ENCODE measurements at regions of chr2 and their contacts with region 1.

Region 1: GRCh38 chr2:41869542-41870264 is 178.1 kb upstream of the PKDCC start:
- DNase-seq: peak; percentile 82
- H3K4me3 Mint-ChIP-seq: no peak overlapping the region
- H3K27ac Mint-ChIP-seq: no peak overlapping the region
- H3K4me1 Mint-ChIP-seq: peaks cover 42% of the 10 kb centered on the region
- H3K27me3 Mint-ChIP-seq: no peaks in the 10 kb centered on the region
- CTCF ChIP-seq: peak; percentile 87

Region 2: DNA sequence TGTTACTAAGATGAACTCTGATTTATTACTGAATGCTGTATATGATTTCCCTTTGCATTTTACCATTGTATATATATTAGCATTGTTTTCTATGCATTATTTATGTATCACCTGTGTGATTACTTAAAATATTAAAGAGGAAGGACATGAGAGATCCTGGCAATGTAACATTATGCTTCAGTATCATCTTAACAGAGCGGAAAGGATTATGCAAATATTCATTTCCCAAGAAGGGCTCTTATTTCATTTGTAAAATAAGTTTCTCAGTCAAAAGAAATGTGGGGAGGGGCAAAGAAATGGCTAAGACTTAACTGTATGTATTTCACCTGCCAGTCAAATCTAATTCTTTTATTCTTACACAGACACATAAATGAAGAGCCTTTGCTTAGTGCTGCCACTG is 476.1 kb before region 1 on chr2:
- CTCF ChIA-PET with region 1: no interaction called
- intact Hi-C with region 1: no loop called
- DNase-seq: no peak
- H3K4me3 Mint-ChIP-seq: no peak overlapping the region
- H3K27ac Mint-ChIP-seq: no peak overlapping the region
- H3K4me1 Mint-ChIP-seq: no peaks in the 10 kb centered on the region
- H3K27me3 Mint-ChIP-seq: no peaks in the 10 kb centered on the region
- CTCF ChIP-seq: no peak

Region 3: GRCh38 chr2:41853427-41854216 is 16.1 kb before region 1 on chr2:
- CTCF ChIA-PET with region 1: interaction called, 16 read pairs
- intact Hi-C with region 1: no loop called
- DNase-seq: peak; percentile 66
- H3K4me3 Mint-ChIP-seq: no peak overlapping the region
- H3K27ac Mint-ChIP-seq: no peak overlapping the region
- H3K4me1 Mint-ChIP-seq: peaks cover 2% of the 10 kb centered on the region
- H3K27me3 Mint-ChIP-seq: no peaks in the 10 kb centered on the region
- CTCF ChIP-seq: peak; percentile 76

Region 4: DNA sequence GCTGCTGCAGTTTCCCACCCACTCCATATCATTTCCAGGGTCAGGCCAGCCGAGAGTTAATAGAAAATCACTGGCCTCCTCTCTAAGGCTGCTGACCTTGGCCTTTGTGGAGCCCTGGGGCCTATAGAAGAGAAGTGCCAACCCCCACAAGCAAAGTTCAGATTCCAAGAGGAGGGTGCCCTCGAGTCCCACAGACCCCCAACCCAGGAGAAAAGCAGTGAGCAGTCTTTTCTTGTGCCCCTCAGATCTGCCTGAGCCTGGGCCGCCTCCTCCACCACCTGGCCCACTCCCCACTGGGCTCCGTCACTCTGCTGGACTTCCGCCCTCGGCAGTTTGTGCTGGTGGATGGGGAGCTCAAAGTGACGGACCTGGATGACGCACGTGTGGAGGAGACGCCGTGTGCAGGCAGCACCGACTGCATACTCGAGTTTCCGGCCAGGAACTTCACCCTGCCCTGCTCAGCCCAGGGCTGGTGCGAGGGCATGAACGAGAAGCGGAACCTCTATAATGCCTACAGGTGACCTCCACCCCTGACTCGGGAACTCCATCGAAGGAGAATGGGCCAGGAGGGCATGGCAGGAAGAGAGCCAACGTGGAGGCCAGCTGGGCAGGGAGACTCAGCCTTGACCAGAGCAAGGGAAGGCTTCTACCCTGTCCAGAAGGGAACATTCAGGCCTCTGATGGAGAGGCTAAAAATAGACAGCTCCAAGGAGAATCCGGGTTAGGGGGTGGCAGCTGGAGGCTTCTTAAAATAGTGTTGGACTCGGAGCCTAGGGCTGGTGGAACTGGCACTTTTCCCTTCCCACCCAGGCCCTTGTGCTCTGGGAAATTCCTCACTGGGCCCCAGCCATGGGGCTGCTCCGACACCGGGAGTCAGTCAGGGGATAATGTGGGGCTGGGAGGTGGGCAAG is 184.3 kb after region 1 on chr2:
- CTCF ChIA-PET with region 1: interaction called, 10 read pairs
- intact Hi-C with region 1: loop called (anchors 1 kb)
- DNase-seq: no peak
- H3K4me3 Mint-ChIP-seq: no peak overlapping the region
- H3K27ac Mint-ChIP-seq: no peak overlapping the region
- H3K4me1 Mint-ChIP-seq: peaks cover 40% of the 10 kb centered on the region
- H3K27me3 Mint-ChIP-seq: no peaks in the 10 kb centered on the region
- CTCF ChIP-seq: no peak

Region 5: DNA sequence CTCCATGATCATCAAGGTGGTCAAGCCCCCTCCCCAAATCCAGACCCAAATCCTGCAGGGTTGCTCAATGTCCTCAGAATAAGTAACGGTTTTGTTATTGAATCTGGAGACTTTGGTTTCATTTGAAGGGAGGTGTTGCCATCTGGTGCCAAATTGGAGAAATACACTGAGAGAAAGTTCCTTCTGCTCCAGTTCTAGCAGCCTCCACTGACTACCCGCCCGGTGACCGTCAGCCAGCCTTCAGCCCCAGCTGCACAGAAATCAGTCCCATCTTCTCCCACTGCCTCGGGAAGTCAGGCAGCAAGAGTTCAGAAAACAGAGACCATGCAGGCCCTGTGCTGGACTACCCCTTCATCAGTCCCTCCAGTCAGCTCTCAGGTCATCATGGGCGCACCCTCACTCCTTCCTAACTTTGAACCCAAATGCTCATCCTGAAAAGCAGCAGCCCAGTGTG is 216.8 kb after region 1 on chr2:
- CTCF ChIA-PET with region 1: interaction called, 25 read pairs
- intact Hi-C with region 1: loop called (anchors 1 kb)
- DNase-seq: peak; percentile 60
- H3K4me3 Mint-ChIP-seq: no peak overlapping the region
- H3K27ac Mint-ChIP-seq: no peak overlapping the region
- H3K4me1 Mint-ChIP-seq: peaks cover 9% of the 10 kb centered on the region
- H3K27me3 Mint-ChIP-seq: no peaks in the 10 kb centered on the region
- CTCF ChIP-seq: peak; percentile 76

Region 6: DNA sequence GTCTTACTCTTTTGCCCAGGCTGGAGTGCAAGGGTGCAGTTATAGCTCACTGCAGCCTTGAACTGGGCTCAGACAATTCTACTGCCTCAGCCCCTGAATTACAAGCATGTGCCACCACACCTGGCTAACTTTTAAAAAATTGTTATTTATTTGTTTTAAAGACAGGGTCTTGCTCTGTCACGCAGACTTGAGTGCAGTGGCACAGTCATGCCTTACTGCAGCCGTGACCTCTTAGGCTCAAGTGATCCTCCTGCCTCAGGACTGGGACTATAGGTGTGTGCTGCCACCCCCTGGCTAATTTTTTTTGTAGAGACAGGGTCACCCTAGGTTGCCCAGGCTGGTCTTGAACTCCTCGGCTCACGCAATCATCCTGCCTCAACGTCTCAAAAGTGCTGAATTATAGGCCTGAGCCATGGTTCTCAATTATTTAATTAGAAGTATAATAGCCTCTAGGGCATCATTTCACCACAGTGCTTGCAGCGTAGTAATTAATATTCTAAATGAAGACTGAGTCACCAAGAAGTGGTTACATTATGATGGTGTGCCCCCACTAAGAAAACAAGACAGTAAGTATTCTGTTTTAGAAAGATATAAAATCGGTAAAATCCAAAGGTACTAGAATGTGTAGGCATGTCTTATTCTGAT is 369.1 kb after region 1 on chr2:
- CTCF ChIA-PET with region 1: no interaction called
- intact Hi-C with region 1: loop called (anchors 10 kb)
- DNase-seq: peak; percentile 63
- H3K4me3 Mint-ChIP-seq: no peak overlapping the region
- H3K27ac Mint-ChIP-seq: no peak overlapping the region
- H3K4me1 Mint-ChIP-seq: peaks cover 47% of the 10 kb centered on the region
- H3K27me3 Mint-ChIP-seq: no peaks in the 10 kb centered on the region
- CTCF ChIP-seq: peak; percentile 48

Measured in Calu3 (cell line).